Right ventricle myocardium inferior (tissue), 1 donor: ENCODE measurements at regions of chr12 and their contacts with region 1.

Region 1: DNA sequence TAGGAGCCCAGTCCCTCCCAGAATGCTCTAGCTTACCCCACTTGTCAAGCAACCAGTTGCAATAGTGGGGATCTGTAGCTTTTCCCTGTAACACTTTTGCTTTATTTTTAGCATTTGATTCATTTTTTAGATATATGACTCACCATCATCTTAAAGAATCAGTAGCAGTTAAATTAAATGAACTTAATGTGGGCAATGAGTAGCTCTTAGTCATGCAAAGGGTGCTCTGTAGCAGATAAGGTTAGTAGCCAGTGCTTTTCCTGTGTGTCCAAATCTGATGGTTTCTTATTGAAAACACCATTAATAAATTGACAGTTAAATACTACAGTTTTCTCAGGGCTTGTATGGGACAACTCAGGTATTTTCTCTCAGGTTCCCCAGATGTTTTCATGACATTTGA is 311.8 kb downstream of the RERGL start:
- DNase-seq: no peak
- ATAC-seq: no peak

Region 2: DNA sequence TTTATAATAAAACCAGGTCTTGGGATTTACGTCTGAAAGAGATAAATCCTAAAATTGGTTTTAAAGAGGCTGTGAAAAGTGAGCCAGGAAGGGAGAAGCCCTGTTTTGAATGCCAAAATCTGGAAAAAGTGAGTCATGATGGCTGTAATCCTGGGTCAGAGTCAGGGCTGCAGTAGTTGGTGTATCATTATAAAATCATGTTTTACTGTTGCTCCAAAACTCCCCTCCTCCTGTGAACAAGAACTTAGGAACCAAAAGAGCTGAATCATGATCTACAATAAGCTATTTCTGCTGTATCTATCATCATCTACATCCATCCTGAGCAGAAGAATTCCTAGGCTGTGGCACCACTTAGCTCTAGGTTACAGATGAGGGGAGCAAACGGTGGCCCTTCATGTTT is 1251.5 kb before region 1 on chr12:
- intact Hi-C with region 1: no loop called
- DNase-seq: no peak
- ATAC-seq: no peak

Region 3: DNA sequence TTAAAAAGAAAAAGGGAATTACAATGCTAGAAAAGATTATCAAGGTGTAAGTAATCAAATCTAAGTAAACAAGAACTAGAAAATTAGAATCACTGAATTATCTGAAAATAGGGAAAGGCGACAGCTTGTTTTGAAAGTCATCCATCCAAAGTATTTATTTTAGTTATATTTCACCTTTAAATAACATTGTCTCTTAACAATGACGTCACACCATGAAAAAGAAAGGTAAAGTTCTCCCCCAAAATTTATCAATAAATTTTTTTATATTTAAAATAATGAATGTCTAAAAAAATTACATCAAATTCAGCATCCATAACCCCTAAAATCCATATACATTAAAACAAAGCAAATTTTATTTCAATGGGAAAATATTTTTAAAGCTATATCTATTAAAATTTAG is 88.6 kb after region 1 on chr12:
- intact Hi-C with region 1: loop called (anchors 5 kb)
- DNase-seq: no peak
- ATAC-seq: no peak